Naive thymus-derived CD4-positive, alpha-beta T cell (primary cell): ENCODE measurements at regions of chr13 and their contacts with region 1.

Region 1: GRCh38 chr13:49443704-49444523 is at the starts of genes CAB39L and SETDB2:
- DNase-seq: peak; percentile 91 to 100 (median 99)
- ATAC-seq: peak; percentile 95
- H3K4me3 ChIP-seq: peak within 1 kb of the TSS; percentile 92
- H3K4me3 Mint-ChIP-seq: peak within 1 kb of the TSS; percentile 91 to 97 (median 95)
- H3K27ac ChIP-seq: peak within 1 kb of the TSS; percentile 83
- H3K27ac Mint-ChIP-seq: peak within 1 kb of the TSS; percentile 95 to 99 (median 97)
- H3K4me1 ChIP-seq: peaks cover 22 to 35% of the 10 kb centered on the region in 2 donors
- H3K4me1 Mint-ChIP-seq: peaks cover 30 to 58% (median 53%) of the 10 kb centered on the region in 7 donors
- H3K27me3 ChIP-seq: no peaks in the 10 kb centered on the region
- H3K27me3 Mint-ChIP-seq: no peaks in the 10 kb centered on the region
- total RNA-seq, gene CAB39L: 2.9 to 5.9 (median 4.6) TPM
- total RNA-seq, gene SETDB2: 16.7 to 30.0 (median 20.3) TPM

Region 2: DNA sequence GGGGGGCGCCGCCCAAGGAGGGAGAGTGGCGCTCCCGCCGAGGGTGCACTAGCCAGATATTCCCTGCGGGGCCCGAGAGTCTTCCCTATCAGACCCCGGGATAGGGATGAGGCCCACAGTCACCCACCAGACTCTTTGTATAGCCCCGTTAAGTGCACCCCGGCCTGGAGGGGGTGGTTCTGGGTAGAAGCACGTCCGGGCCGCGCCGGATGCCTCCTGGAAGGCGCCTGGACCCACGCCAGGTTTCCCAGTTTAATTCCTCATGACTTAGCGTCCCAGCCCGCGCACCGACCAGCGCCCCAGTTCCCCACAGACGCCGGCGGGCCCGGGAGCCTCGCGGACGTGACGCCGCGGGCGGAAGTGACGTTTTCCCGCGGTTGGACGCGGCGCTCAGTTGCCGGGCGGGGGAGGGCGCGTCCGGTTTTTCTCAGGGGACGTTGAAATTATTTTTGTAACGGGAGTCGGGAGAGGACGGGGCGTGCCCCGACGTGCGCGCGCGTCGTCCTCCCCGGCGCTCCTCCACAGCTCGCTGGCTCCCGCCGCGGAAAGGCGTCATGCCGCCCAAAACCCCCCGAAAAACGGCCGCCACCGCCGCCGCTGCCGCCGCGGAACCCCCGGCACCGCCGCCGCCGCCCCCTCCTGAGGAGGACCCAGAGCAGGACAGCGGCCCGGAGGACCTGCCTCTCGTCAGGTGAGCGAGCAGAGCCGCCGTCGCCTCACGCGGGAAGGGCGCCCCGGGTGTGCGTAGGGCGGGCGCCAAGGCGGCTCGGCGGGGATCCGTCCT is 1140.4 kb before region 1 on chr13 and contains the start of gene RB1:
- CTCF ChIA-PET with region 1: no interaction called
- POLR2A ChIA-PET with region 1: no interaction called
- intact Hi-C with region 1: loop called in 1 of 2 experiments (anchors 5 kb)
- DNase-seq: peak; percentile 85 to 92 (median 89)
- ATAC-seq: peak; percentile 92
- H3K4me3 ChIP-seq: peak within 1 kb of the TSS; percentile 85
- H3K4me3 Mint-ChIP-seq: peak within 1 kb of the TSS; percentile 76 to 99 (median 94)
- H3K27ac ChIP-seq: peak within 1 kb of the TSS; percentile 99
- H3K27ac Mint-ChIP-seq: peak within 1 kb of the TSS; percentile 93 to 98 (median 97)
- H3K4me1 ChIP-seq: peaks cover 10 to 15% of the 10 kb centered on the region in 2 donors
- H3K4me1 Mint-ChIP-seq: peaks cover 16 to 47% (median 40%) of the 10 kb centered on the region in 7 donors
- H3K27me3 ChIP-seq: no peaks in the 10 kb centered on the region
- H3K27me3 Mint-ChIP-seq: no peaks in the 10 kb centered on the region
- total RNA-seq, gene RB1: 18.0 to 37.1 (median 23.6) TPM

Region 3: DNA sequence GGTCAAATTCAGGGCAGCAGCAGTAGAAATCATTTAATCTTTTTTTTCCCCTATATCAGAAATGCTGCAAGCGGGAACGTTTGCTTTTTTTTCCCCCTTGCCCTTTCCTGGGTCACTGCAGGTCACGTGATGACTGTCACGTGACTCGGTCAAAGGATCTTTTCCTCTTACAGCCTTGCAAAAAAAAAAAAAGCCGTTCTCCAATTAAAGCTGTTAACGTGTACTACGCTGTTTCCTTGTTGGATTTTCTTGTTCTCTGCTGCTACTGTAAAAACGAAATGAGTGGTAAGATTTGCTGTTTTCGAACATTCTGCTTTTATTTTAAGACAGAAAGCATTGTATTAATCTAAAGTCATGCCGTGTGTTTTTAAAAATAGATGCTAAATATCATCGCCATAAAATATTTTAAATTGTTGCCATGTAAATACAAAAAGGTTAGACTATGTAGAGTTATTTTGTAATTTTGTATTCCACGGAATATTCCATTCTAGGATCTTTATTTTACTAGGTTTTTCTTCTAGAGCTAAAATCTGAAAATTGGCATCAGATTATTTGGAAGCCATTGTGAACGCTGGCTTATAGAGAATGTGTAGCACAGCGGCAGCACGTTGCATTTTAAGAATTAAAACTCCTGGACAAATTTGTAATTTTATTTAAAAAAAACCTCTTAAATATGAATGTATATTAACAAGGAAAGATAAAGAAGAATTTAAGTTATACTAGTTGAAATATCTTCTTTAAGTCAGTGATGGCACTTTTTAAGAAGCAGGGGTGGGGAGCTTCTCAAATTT is 333.6 kb before region 1 on chr13:
- CTCF ChIA-PET with region 1: no interaction called
- POLR2A ChIA-PET with region 1: no interaction called
- intact Hi-C with region 1: loop called (anchors 1 to 10 kb)
- DNase-seq: peak; percentile 36 to 76 (median 68)
- ATAC-seq: peak; percentile 82
- H3K4me3 ChIP-seq: peak overlapping the region; percentile 75
- H3K4me3 Mint-ChIP-seq: peak overlapping the region; percentile 79 to 94 (median 90)
- H3K27ac ChIP-seq: peak overlapping the region; percentile 80
- H3K27ac Mint-ChIP-seq: peak overlapping the region; percentile 79 to 91 (median 90)
- H3K4me1 ChIP-seq: peaks cover 11 to 25% of the 10 kb centered on the region in 2 donors
- H3K4me1 Mint-ChIP-seq: peaks cover 16 to 48% (median 30%) of the 10 kb centered on the region in 7 donors
- H3K27me3 ChIP-seq: no peaks in the 10 kb centered on the region
- H3K27me3 Mint-ChIP-seq: no peaks in the 10 kb centered on the region

Region 4: DNA sequence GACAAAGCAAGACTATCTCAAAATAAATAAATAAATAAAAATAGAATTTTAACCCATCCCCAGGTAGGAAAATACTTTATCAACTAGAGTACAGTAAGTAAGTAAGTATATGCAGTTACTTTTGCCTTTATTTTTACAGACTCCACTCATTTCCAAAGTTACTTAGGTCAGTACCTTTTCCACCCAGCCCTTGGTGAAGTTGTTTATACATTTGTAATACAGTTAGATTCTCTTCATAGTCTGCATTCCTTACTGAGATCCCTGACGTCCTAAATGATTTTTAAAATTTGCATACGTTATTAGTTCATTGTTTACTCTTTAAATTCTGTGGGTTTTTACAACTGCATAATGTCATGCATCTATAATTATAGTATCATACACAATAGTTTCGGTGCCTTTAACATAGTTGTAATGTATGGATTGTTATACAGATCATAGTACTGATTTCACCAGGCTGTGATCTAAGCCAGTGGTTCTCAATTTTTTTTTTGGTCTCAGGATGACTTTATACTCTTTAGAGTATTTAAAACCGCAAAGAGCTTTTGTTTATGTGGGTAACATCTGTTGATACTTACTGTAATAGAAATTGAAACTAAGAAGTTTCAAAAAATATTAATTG is 10.6 kb after region 1 on chr13:
- CTCF ChIA-PET with region 1: interaction called, 3 read pairs
- POLR2A ChIA-PET with region 1: interaction called, 25 read pairs
- intact Hi-C with region 1: loop called (anchors 1 kb)
- DNase-seq: no peak
- ATAC-seq: peak; percentile 50
- H3K4me3 ChIP-seq: no peak overlapping the region
- H3K4me3 Mint-ChIP-seq: peak overlapping the region in 4 of 10 donors; percentile 9 to 33 (median 15)
- H3K27ac ChIP-seq: no peak overlapping the region
- H3K27ac Mint-ChIP-seq: peak overlapping the region in 2 of 9 donors; percentile 31 to 54
- H3K4me1 ChIP-seq: peaks cover 0 to 20% of the 10 kb centered on the region in 2 donors
- H3K4me1 Mint-ChIP-seq: peaks cover 26 to 49% (median 33%) of the 10 kb centered on the region in 7 donors
- H3K27me3 ChIP-seq: no peaks in the 10 kb centered on the region
- H3K27me3 Mint-ChIP-seq: no peaks in the 10 kb centered on the region

Region 5: DNA sequence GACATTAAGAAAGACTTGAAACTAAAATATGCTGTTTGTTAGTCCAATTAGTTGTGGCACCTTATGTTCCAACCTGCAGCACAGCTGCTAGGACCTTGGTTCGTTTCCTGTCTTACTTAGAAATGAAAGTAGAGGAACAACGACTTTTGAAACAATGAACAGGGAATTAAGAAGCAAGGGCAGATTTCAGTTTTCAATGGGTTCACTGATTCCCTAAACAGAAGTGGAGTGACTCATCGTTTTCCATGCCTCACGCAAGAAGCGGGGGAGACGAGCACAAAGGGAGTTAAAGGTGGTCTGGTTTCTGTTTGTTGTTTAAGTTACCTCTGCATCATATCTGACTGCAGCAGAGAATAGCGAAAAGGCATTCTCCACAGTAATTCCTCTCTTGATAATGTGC is 96.6 kb after region 1 on chr13:
- CTCF ChIA-PET with region 1: interaction called, 3 read pairs
- POLR2A ChIA-PET with region 1: interaction called, 25 read pairs
- intact Hi-C with region 1: loop called (anchors 1 to 5 kb)
- DNase-seq: peak in 6 of 9 donors; percentile 25 to 46 (median 30)
- ATAC-seq: peak; percentile 44
- H3K4me3 ChIP-seq: peak overlapping the region; percentile 38
- H3K4me3 Mint-ChIP-seq: peak overlapping the region; percentile 79 to 89 (median 83)
- H3K27ac ChIP-seq: peak overlapping the region; percentile 76
- H3K27ac Mint-ChIP-seq: peak overlapping the region; percentile 89 to 99 (median 94)
- H3K4me1 ChIP-seq: peaks cover 0 to 18% of the 10 kb centered on the region in 2 donors
- H3K4me1 Mint-ChIP-seq: peaks cover 5 to 26% (median 23%) of the 10 kb centered on the region in 7 donors
- H3K27me3 ChIP-seq: no peaks in the 10 kb centered on the region
- H3K27me3 Mint-ChIP-seq: no peaks in the 10 kb centered on the region

Region 6: DNA sequence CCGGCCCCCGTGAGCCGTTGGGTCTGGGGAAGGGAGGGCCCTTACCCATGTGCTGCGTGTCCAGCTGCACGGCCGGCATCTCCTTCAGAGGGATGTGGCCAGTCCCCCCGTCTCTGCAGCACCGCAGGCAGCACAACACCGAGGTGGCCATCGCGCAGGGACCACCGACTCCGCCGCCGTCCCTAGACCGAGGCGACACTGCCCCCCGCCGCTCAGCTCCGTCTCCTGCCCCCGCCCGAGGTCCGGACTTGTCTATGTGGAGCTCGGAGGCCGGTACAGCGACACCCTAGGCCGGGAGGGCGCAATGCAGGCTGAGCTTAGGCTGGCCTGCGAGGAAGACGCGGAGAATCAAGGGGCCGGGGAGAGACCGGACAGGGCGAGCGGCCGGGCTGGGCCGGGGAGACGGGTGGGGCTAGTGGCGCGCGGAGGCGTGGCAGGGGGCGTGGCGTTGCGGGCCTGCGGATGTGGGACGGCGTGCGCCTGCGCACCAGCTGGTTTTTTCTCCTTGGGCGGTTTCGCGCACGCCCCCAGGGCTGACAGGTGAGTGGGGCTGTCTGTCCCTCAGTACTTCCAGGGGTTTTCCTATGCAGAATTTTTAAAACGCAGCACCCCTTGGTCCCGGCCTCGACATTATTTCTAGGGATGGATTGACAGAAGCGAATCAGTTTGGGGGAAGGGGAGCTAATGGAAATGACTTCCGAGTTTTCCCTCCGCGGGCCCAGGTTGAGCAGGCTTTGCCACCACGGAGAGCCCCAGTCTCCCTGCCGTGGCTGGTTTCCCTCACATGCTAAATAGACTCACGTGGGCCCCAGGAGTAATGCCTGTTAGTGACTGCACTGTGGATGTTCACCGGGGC is 492.4 kb after region 1 on chr13 and contains the start of gene SPRYD7:
- CTCF ChIA-PET with region 1: no interaction called
- POLR2A ChIA-PET with region 1: no interaction called
- intact Hi-C with region 1: loop called (anchors 1 kb)
- DNase-seq: peak; percentile 82 to 99 (median 90)
- ATAC-seq: peak; percentile 98
- H3K4me3 ChIP-seq: peak within 1 kb of the TSS; percentile 99
- H3K4me3 Mint-ChIP-seq: peak within 1 kb of the TSS; percentile 86 to 99 (median 96)
- H3K27ac ChIP-seq: peak within 1 kb of the TSS; percentile 69
- H3K27ac Mint-ChIP-seq: peak within 1 kb of the TSS; percentile 74 to 95 (median 86)
- H3K4me1 ChIP-seq: peaks cover 10 to 14% of the 10 kb centered on the region in 2 donors
- H3K4me1 Mint-ChIP-seq: peaks cover 12 to 28% (median 15%) of the 10 kb centered on the region in 7 donors
- H3K27me3 ChIP-seq: no peaks in the 10 kb centered on the region
- H3K27me3 Mint-ChIP-seq: peaks cover 0 to 33% (median 0%) of the 10 kb centered on the region in 5 donors
- total RNA-seq, gene SPRYD7: 1.7 to 3.1 (median 2.3) TPM

Region 7: GRCh38 chr13:50334115-50334778 is 890.3 kb after region 1 on chr13:
- CTCF ChIA-PET with region 1: no interaction called
- POLR2A ChIA-PET with region 1: no interaction called
- intact Hi-C with region 1: no loop called
- DNase-seq: no peak
- ATAC-seq: peak; percentile 65
- H3K4me3 ChIP-seq: no peak overlapping the region
- H3K4me3 Mint-ChIP-seq: no peak overlapping the region
- H3K27ac ChIP-seq: no peak overlapping the region
- H3K27ac Mint-ChIP-seq: no peak overlapping the region
- H3K4me1 ChIP-seq: no peaks in the 10 kb centered on the region
- H3K4me1 Mint-ChIP-seq: peaks cover 0 to 3% (median 0%) of the 10 kb centered on the region in 7 donors
- H3K27me3 ChIP-seq: no peaks in the 10 kb centered on the region
- H3K27me3 Mint-ChIP-seq: peaks cover 0 to 12% (median 0%) of the 10 kb centered on the region in 5 donors

Region 8: GRCh38 chr13:50893211-50893852 is 1449.4 kb after region 1 on chr13:
- CTCF ChIA-PET with region 1: no interaction called
- POLR2A ChIA-PET with region 1: no interaction called
- intact Hi-C with region 1: loop called in 1 of 2 experiments (anchors 10 kb)
- DNase-seq: peak in 7 of 9 donors; percentile 34 to 68 (median 55)
- ATAC-seq: peak; percentile 91
- H3K4me3 ChIP-seq: peak overlapping the region; percentile 30
- H3K4me3 Mint-ChIP-seq: peak overlapping the region; percentile 67 to 88 (median 82)
- H3K27ac ChIP-seq: peak overlapping the region; percentile 69
- H3K27ac Mint-ChIP-seq: peak overlapping the region; percentile 82 to 98 (median 95)
- H3K4me1 ChIP-seq: peaks cover 16 to 27% of the 10 kb centered on the region in 2 donors
- H3K4me1 Mint-ChIP-seq: peaks cover 26 to 50% (median 47%) of the 10 kb centered on the region in 7 donors
- H3K27me3 ChIP-seq: no peaks in the 10 kb centered on the region
- H3K27me3 Mint-ChIP-seq: no peaks in the 10 kb centered on the region